Heart right ventricle (tissue), 16 donors: ENCODE measurements at regions of chr1 and their contacts with region 1.

Region 1: GRCh38 chr1:155569988-155570592 is 7.5 kb upstream of the ASH1L start:
- DNase-seq: no peak
- ATAC-seq: peak in 1 of 8 donors; percentile 57
- H3K4me3 ChIP-seq: no peak overlapping the region
- H3K27ac ChIP-seq: no peak overlapping the region
- H3K4me1 ChIP-seq: peaks cover 0 to 15% (median 8%) of the 10 kb centered on the region in 9 donors
- H3K27me3 ChIP-seq: no peaks in the 10 kb centered on the region
- CTCF ChIP-seq: no peak

Region 2: GRCh38 chr1:154943649-154944400 is 626.3 kb before region 1 on chr1:
- intact Hi-C with region 1: no loop called
- DNase-seq: peak in 1 of 2 donors; percentile 34
- ATAC-seq: peak in 6 of 8 donors; percentile 30 to 60 (median 54)
- H3K4me3 ChIP-seq: no peak overlapping the region
- H3K27ac ChIP-seq: peak overlapping the region in 8 of 10 donors; percentile 17 to 78 (median 36)
- H3K4me1 ChIP-seq: peaks cover 0 to 52% (median 33%) of the 10 kb centered on the region in 9 donors
- H3K27me3 ChIP-seq: no peaks in the 10 kb centered on the region
- CTCF ChIP-seq: peak; percentile 52 to 83 (median 76)

Region 3: GRCh38 chr1:154970631-154971340 is 599.3 kb before region 1 on chr1 and contains the start of gene SHC1:
- intact Hi-C with region 1: no loop called
- DNase-seq: peak; percentile 91 to 94
- ATAC-seq: peak; percentile 50 to 73 (median 66)
- H3K4me3 ChIP-seq: peak within 1 kb of the TSS; percentile 4 to 89 (median 54)
- H3K27ac ChIP-seq: peak within 1 kb of the TSS; percentile 89 to 100 (median 96)
- H3K4me1 ChIP-seq: peaks cover 28 to 78% (median 71%) of the 10 kb centered on the region in 9 donors
- H3K27me3 ChIP-seq: no peaks in the 10 kb centered on the region
- CTCF ChIP-seq: no peak
- total RNA-seq, gene SHC1: 42.6 to 95.7 (median 57.8) TPM

Region 4: GRCh38 chr1:155038602-155039307 is 531.3 kb before region 1 on chr1:
- intact Hi-C with region 1: no loop called
- DNase-seq: no peak
- ATAC-seq: peak in 2 of 8 donors; percentile 41 to 55
- H3K4me3 ChIP-seq: no peak overlapping the region
- H3K27ac ChIP-seq: no peak overlapping the region
- H3K4me1 ChIP-seq: peaks cover 0 to 23% (median 2%) of the 10 kb centered on the region in 9 donors
- H3K27me3 ChIP-seq: no peaks in the 10 kb centered on the region
- CTCF ChIP-seq: no peak

Region 5: DNA sequence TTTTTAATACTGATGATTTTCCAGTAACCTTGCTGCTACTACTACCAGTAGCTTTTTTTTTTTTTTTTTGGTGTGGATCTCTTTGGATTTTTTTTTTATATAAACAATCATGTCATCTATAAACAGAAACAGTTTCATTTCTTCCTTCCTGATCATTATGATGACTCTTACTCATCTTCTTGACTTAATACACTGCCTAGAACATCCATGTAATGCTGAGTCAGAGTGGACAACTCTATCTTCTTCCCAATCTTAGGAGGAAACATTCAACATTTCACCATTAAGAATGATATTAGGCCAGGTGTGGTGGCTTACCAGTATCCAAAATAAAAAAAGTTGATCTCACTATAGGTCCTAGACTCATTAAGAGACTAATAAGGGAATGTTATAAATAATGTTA is 180.3 kb before region 1 on chr1:
- intact Hi-C with region 1: loop called in 1 of 10 experiments (anchors 5 kb)
- DNase-seq: no peak
- ATAC-seq: no peak
- H3K4me3 ChIP-seq: no peak overlapping the region
- H3K27ac ChIP-seq: no peak overlapping the region
- H3K4me1 ChIP-seq: no peaks in the 10 kb centered on the region
- H3K27me3 ChIP-seq: no peaks in the 10 kb centered on the region
- CTCF ChIP-seq: no peak

Region 6: DNA sequence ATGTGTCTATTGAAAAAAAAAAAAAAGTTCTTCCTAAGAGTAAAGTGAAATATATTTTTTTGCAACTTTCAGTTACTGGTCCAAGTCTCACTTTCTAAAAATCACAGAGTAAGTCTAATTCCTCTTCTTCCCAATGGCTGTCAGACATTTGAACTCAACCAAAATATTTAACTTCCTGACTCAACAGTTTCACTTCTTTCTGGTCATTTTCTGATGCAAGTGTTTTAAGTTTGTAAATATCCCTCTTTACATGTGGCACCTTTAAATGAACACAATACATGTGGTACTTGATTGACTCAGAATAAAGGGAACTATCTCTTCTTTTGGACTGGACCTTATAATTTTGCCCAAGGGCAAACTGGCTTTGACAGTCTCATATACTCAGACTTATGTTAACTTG is 84.1 kb before region 1 on chr1:
- intact Hi-C with region 1: no loop called
- DNase-seq: no peak
- ATAC-seq: peak in 3 of 8 donors; percentile 12 to 33 (median 21)
- H3K4me3 ChIP-seq: no peak overlapping the region
- H3K27ac ChIP-seq: no peak overlapping the region
- H3K4me1 ChIP-seq: peaks cover 0 to 17% (median 0%) of the 10 kb centered on the region in 9 donors
- H3K27me3 ChIP-seq: no peaks in the 10 kb centered on the region
- CTCF ChIP-seq: no peak